ENCODE measurements at regions of chr11 and their contacts with region 1.

Region 1: GRCh38 chr11:7642742-7643141 is 30.6 kb downstream of the CYB5R2 start:
- DNase-seq: no peak
- ATAC-seq: no peak
- H3K4me3 ChIP-seq: no peak overlapping the region
- H3K27ac ChIP-seq: no peak overlapping the region
- H3K4me1 ChIP-seq: no peaks in the 10 kb centered on the region
- H3K27me3 ChIP-seq: no peaks in the 10 kb centered on the region
- CTCF ChIP-seq: no peak

Region 2: DNA sequence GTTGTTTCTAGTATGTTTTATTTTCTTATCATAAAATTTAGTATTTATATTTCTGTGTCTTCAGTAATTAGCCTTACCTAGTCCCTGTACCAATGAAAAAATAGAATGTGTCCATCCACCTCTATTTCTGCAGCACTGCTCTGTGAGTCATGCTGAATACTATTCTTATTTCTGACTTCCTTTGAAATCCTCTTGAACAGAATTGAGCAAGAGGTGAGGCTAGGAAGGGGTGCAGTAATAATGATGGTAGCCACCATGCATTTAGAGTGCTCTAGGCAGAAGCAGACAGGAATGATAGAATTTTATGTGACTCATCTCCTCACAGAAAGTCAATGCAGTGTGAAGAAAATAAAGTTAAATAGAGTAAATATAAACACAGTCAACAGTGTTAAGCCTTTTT is 228.3 kb after region 1 on chr11:
- CTCF ChIA-PET with region 1: no interaction called
- POLR2A ChIA-PET with region 1: interaction called, 12 read pairs
- in situ Hi-C with region 1: no loop called
- intact Hi-C with region 1: no loop called
- DNase-seq: no peak
- ATAC-seq: no peak
- H3K4me3 ChIP-seq: no peak overlapping the region
- H3K27ac ChIP-seq: no peak overlapping the region
- H3K4me1 ChIP-seq: no peaks in the 10 kb centered on the region
- H3K27me3 ChIP-seq: no peaks in the 10 kb centered on the region; the same call in 1 of the 2 replicates
- CTCF ChIP-seq: no peak

Measured in Panc1 (cell line).